Breast epithelium (tissue), 4 donors: ENCODE measurements at regions of chr6 and their contacts with region 1.

Region 1: DNA sequence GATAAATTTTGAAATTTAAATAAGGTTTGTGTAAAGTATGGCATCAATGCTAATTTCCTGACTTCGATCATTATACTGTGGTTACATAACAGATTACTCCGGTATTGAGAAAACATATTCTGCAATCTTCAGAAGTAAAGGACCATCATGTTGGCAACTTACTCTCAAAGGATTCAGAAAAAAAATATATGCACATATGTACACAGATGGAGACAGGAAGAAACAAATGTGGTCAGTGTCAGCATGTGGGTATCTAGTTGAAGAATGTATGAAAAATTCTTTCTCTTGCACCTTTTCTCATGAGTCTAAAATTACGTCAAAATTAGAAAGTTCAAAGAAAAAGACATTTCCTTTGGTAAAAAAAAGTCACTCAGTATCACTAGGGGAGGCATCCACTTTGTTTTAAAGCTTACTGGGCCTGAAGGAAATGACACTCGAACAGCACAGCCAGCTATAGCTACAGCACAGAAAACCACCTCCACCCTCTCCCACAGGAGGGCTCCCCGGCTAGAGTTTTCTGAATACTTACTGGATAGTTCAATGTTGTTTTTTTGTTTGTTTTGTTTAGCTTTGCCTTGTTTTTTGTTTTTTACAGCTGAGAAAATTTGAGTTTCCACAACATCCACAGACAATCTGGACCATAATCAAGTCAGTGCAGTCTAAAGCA is 317.2 kb upstream of the AGPAT4 start:
- DNase-seq: no peak
- H3K4me3 ChIP-seq: no peak overlapping the region
- H3K27ac ChIP-seq: no peak overlapping the region
- H3K4me1 ChIP-seq: no peaks in the 10 kb centered on the region
- H3K27me3 ChIP-seq: no peaks in the 10 kb centered on the region
- CTCF ChIP-seq: no peak
- POLR2A ChIP-seq: no peak

Region 2: GRCh38 chr6:161526794-161527193 is 64.3 kb before region 1 on chr6:
- intact Hi-C with region 1: loop called (anchors 2 kb)
- DNase-seq: no peak
- H3K4me3 ChIP-seq: no peak overlapping the region
- H3K27ac ChIP-seq: no peak overlapping the region
- H3K4me1 ChIP-seq: no peaks in the 10 kb centered on the region
- H3K27me3 ChIP-seq: no peaks in the 10 kb centered on the region
- CTCF ChIP-seq: no peak
- POLR2A ChIP-seq: no peak

Region 3: GRCh38 chr6:161631676-161632194 is 40.6 kb after region 1 on chr6:
- intact Hi-C with region 1: no loop called
- DNase-seq: no peak
- H3K4me3 ChIP-seq: no peak overlapping the region
- H3K27ac ChIP-seq: peak overlapping the region in 1 of 2 donors; percentile 10
- H3K4me1 ChIP-seq: no peaks in the 10 kb centered on the region
- H3K27me3 ChIP-seq: no peaks in the 10 kb centered on the region
- CTCF ChIP-seq: no peak
- POLR2A ChIP-seq: no peak